Activated naive CD4-positive, alpha-beta T cell treated with anti-CD3 and anti-CD28 coated beads for 36 hours (primary cell): ENCODE measurements at regions of chr20 and their contacts with region 1.

Region 1: DNA sequence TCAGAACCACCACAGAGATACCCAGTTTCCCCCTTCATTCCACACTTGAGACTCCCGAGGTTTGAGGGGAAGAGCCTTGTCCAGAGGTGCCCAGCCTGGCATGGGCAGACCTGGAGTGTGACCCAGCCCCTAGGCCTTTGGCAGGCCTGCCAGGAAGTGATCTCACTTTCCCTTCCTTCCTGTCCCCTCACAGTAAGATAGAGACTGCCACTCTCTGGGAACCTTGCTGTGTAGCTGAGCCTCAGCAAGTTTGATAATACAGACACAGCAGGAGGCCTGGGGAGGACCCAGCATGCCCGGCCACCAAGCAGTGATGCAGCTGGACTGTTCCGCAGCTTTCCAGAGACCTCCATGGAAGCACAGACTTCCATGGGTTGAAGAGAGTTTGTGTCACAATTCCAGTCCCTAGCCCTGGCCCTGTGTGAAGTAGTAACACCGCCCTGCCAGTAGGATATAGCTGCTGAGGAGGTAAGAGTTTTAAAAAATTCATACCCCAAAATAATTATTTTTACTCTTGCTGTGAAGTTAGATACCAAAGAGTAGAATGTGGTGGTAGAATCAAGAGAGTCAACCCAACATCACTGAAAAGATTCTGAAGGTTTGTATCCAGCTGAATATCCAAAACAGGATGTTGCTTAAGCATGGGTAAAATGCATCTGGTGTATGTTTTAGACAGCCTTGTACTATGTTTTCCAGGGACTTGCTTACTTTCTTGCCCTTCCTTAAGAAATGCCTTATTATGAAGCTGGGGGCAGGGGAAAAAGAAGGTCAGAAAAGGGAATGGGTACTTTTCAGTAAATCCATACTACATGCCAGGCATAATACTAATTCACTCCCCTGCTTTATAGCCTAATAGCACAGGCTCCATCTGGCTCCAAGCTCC is 16.3 kb downstream of the PKIG start:
- DNase-seq: peak; percentile 61
- H3K4me3 Mint-ChIP-seq: peak overlapping the region; percentile 70
- H3K27ac Mint-ChIP-seq: peak overlapping the region; percentile 81
- H3K4me1 Mint-ChIP-seq: peaks cover 32% of the 10 kb centered on the region
- H3K27me3 Mint-ChIP-seq: no peaks in the 10 kb centered on the region

Region 2: DNA sequence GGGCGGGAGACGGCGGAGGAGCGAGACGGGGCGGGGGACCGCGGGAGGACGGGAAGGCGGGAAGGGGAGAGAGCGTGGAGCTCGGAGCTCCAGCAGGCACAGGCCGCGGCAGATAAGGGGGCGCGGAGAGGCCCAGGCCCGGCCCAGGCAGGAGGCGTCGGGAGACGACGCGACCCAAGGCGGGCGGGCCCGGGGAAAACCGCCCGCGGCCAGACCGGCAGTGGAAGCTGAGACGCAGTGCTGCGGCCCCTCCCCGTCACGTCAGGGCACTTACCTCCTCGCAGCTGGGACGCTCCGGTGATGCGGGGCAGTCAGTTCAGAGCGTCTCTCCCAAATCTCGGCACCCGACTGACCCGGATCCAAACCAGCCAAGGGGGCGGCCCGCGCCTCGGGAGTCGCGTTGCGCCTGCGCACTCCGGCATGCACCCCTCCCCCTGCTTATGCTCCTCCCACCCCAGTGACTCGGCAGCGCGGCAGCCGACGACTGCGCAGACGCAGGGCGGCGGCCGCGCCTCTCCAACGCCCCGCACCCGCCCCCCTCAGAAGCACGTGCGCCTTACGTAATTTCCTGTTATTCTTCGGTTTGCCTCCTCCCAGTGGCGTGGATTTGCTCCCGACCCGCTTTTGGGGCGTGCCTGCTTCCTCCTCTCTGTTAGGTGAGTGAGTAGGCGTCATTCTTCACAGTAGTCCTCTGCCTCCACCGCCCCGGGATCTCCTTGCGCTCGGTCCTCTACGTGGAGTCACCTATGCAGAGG is 388.1 kb before region 1 on chr20 and contains the start of gene OSER1:
- CTCF ChIA-PET with region 1: no interaction called
- intact Hi-C with region 1: loop called (anchors 5 kb)
- DNase-seq: peak; percentile 99
- H3K4me3 Mint-ChIP-seq: peak within 1 kb of the TSS; percentile 94
- H3K27ac Mint-ChIP-seq: peak within 1 kb of the TSS; percentile 92
- H3K4me1 Mint-ChIP-seq: peaks cover 61% of the 10 kb centered on the region
- H3K27me3 Mint-ChIP-seq: no peaks in the 10 kb centered on the region
- total RNA-seq, gene OSER1: 27.7 to 28.4 TPM

Region 3: DNA sequence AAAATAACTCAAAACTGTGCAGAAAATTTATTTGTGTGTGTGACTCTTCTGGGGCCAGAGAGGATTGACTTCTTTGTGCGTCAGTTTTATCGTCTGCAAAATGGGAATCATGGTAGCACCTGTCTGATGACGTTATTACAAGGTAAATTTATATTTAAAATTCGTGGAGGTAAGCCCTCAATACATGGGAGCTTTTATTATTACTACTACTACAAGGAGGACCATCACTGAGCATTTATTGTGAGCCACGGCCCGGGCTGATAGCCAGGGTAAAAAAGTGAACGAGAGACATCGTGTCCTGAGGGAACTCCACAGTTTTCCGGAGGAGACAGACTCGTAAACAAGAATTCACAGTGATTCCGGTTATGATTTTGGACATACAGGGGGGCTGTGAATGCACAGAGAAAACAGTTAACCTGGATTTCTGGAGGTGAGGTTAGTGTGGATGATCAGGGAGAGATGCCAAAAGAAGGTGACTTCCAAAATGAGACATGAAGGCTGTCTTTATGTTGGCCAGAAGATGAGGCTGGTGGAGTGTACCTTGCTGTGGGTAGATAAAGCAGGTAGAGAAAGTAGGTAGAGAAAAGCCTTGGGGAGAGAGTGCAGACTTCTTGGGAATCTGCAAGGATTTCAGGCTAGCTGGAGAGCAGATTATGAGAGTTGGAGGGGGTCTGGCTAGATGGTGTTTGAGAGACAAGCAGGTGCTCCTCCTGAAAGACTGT is 66.2 kb before region 1 on chr20:
- CTCF ChIA-PET with region 1: no interaction called
- intact Hi-C with region 1: loop called (anchors 2 kb)
- DNase-seq: no peak
- H3K4me3 Mint-ChIP-seq: no peak overlapping the region
- H3K27ac Mint-ChIP-seq: no peak overlapping the region
- H3K4me1 Mint-ChIP-seq: peaks cover 4% of the 10 kb centered on the region
- H3K27me3 Mint-ChIP-seq: no peaks in the 10 kb centered on the region

Region 4: DNA sequence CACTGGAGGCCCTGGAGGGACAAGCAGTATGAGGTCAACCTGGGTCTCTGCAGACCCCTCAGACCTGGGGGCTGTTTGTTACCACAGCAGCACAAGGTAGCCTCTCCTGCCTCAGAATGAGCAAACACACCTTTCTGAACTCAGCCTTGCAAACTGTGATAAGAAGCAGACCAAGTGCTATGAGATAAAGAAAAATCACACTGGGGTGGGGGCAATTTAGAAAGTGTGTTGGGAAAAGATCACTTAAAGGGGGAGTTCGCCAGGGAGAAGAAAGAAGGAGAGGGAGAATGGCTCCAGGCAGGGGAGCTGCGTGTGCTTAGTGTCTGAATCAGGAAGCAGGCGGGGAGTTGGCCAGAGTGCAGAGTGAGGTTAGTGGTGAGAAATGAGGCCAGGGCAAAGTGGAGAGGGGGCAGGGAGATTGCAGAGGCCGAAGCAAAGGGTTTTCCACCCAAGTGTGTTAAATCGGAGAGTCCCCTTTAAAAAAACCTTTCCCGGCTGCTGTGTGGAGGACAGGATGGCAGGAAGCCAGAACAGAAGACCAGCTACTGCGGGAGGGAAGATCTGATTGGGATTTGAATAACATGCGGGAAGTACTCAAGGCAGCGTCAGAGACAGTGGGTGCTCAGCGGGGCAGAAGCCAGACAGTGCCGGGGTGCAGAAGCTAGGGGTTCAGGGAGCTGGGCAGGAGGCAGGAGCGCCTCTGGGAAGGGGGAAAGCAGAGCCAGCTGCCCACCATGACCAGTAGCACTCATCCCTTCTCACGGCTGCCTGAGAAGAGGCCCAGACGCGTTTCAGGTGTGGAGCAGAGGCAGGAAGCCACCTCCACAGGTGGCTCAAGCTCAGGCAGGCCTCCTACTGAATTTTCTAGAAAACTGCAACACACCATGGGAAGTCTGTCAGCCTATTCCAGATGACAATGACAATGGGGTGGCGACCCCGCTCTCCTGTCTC is 43.8 kb after region 1 on chr20:
- CTCF ChIA-PET with region 1: no interaction called
- intact Hi-C with region 1: loop called (anchors 1 kb)
- DNase-seq: peak; percentile 52
- H3K4me3 Mint-ChIP-seq: peak overlapping the region; percentile 19
- H3K27ac Mint-ChIP-seq: peak overlapping the region; percentile 57
- H3K4me1 Mint-ChIP-seq: peaks cover 60% of the 10 kb centered on the region
- H3K27me3 Mint-ChIP-seq: no peaks in the 10 kb centered on the region

Region 5: GRCh38 chr20:44762466-44763140 is 163.9 kb after region 1 on chr20:
- CTCF ChIA-PET with region 1: no interaction called
- intact Hi-C with region 1: no loop called
- DNase-seq: no peak
- H3K4me3 Mint-ChIP-seq: no peak overlapping the region
- H3K27ac Mint-ChIP-seq: no peak overlapping the region
- H3K4me1 Mint-ChIP-seq: no peaks in the 10 kb centered on the region
- H3K27me3 Mint-ChIP-seq: peaks cover 4% of the 10 kb centered on the region